ENCODE measurements at regions of chr3 and their contacts with region 1.

Region 1: DNA sequence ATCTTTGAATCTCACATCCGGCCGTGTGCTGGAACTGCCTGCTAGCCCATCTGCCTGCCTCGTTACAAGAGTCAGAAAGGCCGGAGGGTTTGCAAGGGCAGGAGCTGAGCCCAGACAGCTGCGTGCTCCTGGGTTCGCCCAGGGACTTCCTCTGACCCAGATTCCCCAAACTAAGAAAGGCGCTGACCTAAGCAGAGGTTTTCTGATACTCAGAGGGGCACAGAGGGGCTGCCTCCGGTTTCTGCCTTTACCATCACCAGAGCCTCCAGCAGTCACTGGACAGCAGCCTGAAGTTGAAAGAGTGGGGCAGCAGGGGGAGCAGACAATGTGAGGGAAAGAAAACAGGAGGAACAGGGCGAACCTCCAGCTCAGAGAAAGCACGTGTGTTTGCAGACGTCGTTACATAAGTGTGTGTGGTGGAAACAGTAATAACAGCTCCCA is 33.4 kb upstream of the RAD18 start:
- DNase-seq: peak; percentile 64 to 66
- H3K4me3 ChIP-seq: no peak overlapping the region
- H3K4me3 Mint-ChIP-seq: no peak overlapping the region
- H3K27ac Mint-ChIP-seq: no peak overlapping the region
- H3K4me1 ChIP-seq: no peaks in the 10 kb centered on the region
- H3K4me1 Mint-ChIP-seq: peaks cover 8% of the 10 kb centered on the region
- H3K27me3 ChIP-seq: no peaks in the 10 kb centered on the region
- H3K27me3 Mint-ChIP-seq: peaks cover 13% of the 10 kb centered on the region
- CTCF ChIP-seq: peak; percentile 42 to 63

Region 2: DNA sequence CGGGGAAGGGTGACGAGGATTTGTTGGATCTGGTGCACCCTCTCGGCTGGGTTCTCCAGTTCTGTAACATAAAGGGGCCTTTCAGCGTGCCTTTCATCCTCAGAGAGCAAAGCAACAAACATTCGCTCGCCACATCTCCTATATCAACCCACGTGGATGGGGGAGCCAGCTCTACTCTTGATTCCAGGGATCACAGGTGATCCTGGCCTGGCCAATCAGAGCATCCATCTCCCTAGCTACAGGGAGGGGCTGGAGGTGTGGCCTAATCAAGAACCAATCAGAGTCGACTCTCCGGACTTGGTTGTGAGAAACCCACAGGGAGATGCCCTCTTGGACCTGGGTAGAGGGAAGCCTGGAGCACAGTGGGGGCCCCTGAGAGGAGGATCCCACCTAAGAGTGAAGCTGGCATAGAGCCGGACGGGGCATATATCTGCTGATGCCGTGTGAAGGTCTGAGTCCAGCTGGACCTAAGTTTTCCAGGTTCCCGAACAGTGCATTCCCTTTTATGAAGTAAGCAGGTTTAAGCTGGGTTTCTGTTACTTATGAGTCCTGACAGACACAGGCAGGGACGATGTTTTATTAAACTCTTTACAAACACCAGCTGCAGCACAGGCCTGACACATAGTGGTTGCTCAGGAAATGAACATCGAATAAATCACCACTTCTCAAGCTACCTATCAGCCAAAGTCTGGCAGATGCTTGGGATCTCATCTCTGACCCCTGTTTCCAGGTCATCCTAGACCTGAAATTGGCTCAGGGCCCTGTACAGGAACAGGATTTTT is 17.3 kb after region 1 on chr3:
- CTCF ChIA-PET with region 1: interaction called, 11 read pairs
- POLR2A ChIA-PET with region 1: no interaction called
- intact Hi-C with region 1: loop called (anchors 1 kb)
- DNase-seq: no peak
- H3K4me3 ChIP-seq: no peak overlapping the region
- H3K4me3 Mint-ChIP-seq: no peak overlapping the region
- H3K27ac Mint-ChIP-seq: no peak overlapping the region
- H3K4me1 ChIP-seq: no peaks in the 10 kb centered on the region
- H3K4me1 Mint-ChIP-seq: no peaks in the 10 kb centered on the region
- H3K27me3 ChIP-seq: no peaks in the 10 kb centered on the region
- H3K27me3 Mint-ChIP-seq: peaks cover 16% of the 10 kb centered on the region
- CTCF ChIP-seq: peak in 1 of 2 experiments; percentile 26

Measured in Caco-2 (cell line).